Ascending aorta (tissue), 2 donors: ENCODE measurements at regions of chr7 and their contacts with region 1.

Region 1: DNA sequence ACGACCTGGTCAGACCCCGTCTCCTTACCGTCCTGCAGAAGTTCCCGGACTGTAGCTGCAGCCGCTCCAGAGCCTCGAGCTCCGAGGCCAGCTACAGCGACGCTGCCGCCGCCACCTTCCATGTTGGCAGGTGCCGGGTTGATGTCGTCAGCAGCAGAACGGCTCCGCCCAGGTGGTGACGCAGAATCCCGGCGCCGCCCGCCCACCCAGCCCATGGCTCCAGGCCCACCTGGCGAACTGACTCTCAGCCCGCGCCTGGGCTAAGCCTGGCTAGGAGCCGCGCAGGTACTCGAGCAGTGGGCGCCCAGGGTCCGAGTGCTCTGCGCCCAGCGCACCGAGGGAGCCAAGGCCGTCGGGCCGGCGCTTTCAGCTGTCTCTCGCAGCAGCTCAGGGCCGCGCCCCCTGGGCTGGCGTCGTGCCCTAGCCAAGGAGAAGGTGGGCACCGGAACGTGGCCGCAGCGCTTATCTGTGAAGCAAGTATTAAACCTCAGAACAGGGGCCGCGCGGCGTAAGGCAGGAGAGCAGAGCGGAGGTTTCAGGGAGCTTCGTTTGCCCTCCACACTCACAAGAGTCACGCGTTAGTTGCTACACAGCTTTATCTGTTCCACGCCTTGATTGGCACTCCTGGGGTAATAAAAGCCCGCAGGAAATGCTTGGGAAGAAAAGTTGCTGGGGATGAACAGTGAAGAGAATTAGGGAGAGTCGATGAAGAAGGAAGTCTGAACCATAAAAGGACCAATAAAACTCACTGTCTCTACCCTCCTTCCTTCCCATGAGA is at the starts of genes COG5 and DUS4L:
- DNase-seq: peak; percentile 31 to 89
- H3K4me3 ChIP-seq: peak within 1 kb of the TSS; percentile 94 to 96
- H3K27ac ChIP-seq: peak within 1 kb of the TSS; percentile 96 to 97
- H3K4me1 ChIP-seq: peaks cover 3 to 21% of the 10 kb centered on the region in 2 donors
- H3K27me3 ChIP-seq: no peaks in the 10 kb centered on the region
- CTCF ChIP-seq: no peak
- total RNA-seq, gene COG5: 16.8 TPM
- total RNA-seq, gene DUS4L: 0.75 TPM

Region 2: GRCh38 chr7:107394831-107395230 is 169.1 kb before region 1 on chr7:
- intact Hi-C with region 1: loop called (anchors 10 kb)
- DNase-seq: no peak
- H3K4me3 ChIP-seq: no peak overlapping the region
- H3K27ac ChIP-seq: peak overlapping the region; percentile 62 to 68
- H3K4me1 ChIP-seq: peaks cover 0 to 16% of the 10 kb centered on the region in 2 donors
- H3K27me3 ChIP-seq: no peaks in the 10 kb centered on the region
- CTCF ChIP-seq: no peak

Region 3: DNA sequence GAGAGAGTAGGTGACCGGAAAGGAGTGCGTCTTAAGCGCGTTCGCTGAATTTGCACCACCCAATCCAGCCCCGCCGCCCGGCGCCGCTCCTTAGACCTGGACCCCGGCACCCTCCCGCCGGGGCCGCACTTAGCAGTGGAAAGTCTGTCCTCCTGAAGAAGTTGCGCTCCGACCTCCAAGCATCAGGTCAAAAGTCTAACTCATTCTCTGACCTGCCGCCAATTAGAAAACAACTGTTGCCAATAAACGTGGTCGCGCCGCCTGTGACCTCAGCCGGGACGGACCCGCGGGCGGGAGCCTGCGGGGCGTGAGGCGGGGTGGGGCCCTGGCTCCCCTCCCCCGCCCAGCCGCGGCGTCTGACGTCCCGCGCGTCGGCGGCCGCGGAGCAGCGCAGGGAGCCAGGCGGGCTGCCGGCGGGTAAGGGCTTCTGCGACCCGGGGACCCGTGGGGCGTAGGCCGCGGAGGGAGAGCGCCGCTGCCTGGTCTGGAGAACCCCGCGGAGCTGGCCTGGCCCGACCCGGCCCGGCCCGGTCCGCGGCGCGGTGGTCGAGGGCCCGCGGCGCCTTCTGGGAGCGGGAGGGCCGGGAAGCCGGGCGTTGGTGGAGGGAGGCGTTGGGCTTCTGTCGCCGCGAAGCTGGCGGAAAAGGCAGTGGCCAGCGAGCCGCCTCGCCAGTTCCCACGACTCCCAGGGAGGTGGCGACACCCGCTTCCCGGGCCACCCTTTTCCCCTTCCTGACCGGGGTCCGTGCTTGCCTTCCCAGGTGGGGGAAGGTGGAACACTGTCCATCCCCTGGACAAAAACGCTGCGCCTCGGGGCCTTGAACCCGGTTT is 16.1 kb after region 1 on chr7 and contains the start of gene BCAP29:
- intact Hi-C with region 1: loop called (anchors 1 kb)
- DNase-seq: peak; percentile 19 to 89
- H3K4me3 ChIP-seq: peak within 1 kb of the TSS; percentile 84 to 91
- H3K27ac ChIP-seq: peak within 1 kb of the TSS; percentile 93 to 97
- H3K4me1 ChIP-seq: peaks cover 0 to 11% of the 10 kb centered on the region in 2 donors
- H3K27me3 ChIP-seq: no peaks in the 10 kb centered on the region
- CTCF ChIP-seq: peak; percentile 22 to 50 (median 29)
- total RNA-seq, gene BCAP29: 73.2 TPM

Region 4: DNA sequence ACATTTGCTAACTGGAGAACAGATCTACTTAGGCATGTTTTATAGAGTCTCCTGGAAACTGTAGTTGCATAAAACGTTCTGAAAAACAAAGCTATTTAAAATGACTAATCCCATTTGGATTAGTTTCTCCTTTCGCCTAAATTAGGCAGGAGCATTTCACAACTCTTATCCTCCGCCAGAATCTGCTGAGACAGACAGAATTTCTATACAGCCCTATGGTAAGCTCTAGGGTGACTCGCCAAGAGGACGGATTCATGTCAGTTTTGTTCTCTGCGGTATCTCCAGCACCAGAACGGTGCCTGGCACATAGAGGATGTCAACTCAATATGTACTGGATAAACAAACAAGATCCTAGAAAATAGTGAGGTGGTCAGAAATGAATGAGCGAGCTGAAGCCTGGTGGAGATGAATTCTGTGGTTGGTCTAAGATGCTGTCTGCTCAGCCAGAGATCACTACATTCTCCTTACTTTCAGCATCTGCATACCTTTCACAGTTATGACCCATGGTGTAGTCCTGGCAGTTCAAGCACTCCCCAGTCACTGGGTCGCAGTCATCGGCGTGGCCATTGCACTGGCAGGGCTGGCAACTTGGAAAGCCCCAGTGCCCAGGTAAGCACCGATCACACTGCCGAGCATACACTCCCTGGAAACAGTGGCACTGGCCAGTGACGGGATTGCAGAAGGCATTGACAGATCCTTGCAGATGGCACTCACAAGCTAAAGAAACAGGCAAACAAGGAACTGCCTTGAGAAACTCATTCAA is 395.0 kb after region 1 on chr7:
- intact Hi-C with region 1: no loop called
- DNase-seq: peak in 1 of 2 donors; percentile 79
- H3K4me3 ChIP-seq: peak overlapping the region in 1 of 2 donors; percentile 13
- H3K27ac ChIP-seq: peak overlapping the region; percentile 63 to 66
- H3K4me1 ChIP-seq: peaks cover 0 to 24% of the 10 kb centered on the region in 2 donors
- H3K27me3 ChIP-seq: no peaks in the 10 kb centered on the region
- CTCF ChIP-seq: no peak